ENCODE measurements at regions of chr7 and their contacts with region 1.

Region 1: GRCh38 chr7:106176414-106177299 is 64.5 kb upstream of the SYPL1 start:
- DNase-seq: peak; percentile 83
- H3K4me3 ChIP-seq: no peak overlapping the region
- H3K27ac ChIP-seq: no peak overlapping the region
- H3K4me1 ChIP-seq: no peaks in the 10 kb centered on the region
- H3K27me3 ChIP-seq: no peaks in the 10 kb centered on the region
- CTCF ChIP-seq: peak; percentile 98

Region 2: DNA sequence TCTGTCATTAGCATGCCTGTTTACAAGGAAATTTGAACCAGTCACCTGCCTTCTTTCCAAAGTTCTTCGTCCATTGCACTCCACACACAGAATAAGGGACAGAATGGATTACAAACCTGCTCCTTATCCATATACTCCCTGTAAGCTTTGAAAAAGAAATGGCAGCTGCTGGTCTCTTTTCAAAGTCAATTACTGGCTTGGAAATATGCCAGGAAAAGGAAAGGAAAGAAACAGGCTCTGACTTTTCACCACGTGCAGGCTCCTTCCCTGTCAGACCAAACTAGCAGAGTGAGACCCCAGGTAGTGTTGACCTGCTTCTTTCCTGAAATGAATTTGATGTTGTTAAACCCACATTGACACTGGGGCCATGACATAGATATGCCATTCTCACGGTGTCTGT is 1763.7 kb before region 1 on chr7:
- CTCF ChIA-PET with region 1: no interaction called
- POLR2A ChIA-PET with region 1: no interaction called
- intact Hi-C with region 1: no loop called
- DNase-seq: peak; percentile 1
- H3K4me3 ChIP-seq: no peak overlapping the region
- H3K27ac ChIP-seq: no peak overlapping the region
- H3K4me1 ChIP-seq: no peaks in the 10 kb centered on the region
- H3K27me3 ChIP-seq: peaks cover 3% of the 10 kb centered on the region
- CTCF ChIP-seq: no peak

Region 3: GRCh38 chr7:106367018-106367420 is 190.4 kb after region 1 on chr7:
- CTCF ChIA-PET with region 1: interaction called, 3 read pairs
- POLR2A ChIA-PET with region 1: no interaction called
- intact Hi-C with region 1: loop called (anchors 5 kb)
- DNase-seq: peak; percentile 61
- H3K4me3 ChIP-seq: no peak overlapping the region
- H3K27ac ChIP-seq: no peak overlapping the region
- H3K4me1 ChIP-seq: no peaks in the 10 kb centered on the region
- H3K27me3 ChIP-seq: no peaks in the 10 kb centered on the region
- CTCF ChIP-seq: peak; percentile 62

Region 4: GRCh38 chr7:106461993-106462859 is 285.6 kb after region 1 on chr7:
- CTCF ChIA-PET with region 1: interaction called, 72 read pairs
- POLR2A ChIA-PET with region 1: no interaction called
- intact Hi-C with region 1: loop called (anchors 1 kb)
- DNase-seq: peak; percentile 54
- H3K4me3 ChIP-seq: no peak overlapping the region
- H3K27ac ChIP-seq: no peak overlapping the region
- H3K4me1 ChIP-seq: peaks cover 4% of the 10 kb centered on the region
- H3K27me3 ChIP-seq: no peaks in the 10 kb centered on the region
- CTCF ChIP-seq: peak; percentile 60

Region 5: GRCh38 chr7:106659963-106660861 is 483.6 kb after region 1 on chr7:
- CTCF ChIA-PET with region 1: interaction called, 8 read pairs
- POLR2A ChIA-PET with region 1: no interaction called
- intact Hi-C with region 1: loop called (anchors 5 kb)
- DNase-seq: peak; percentile 82
- H3K4me3 ChIP-seq: peak overlapping the region; percentile 84
- H3K27ac ChIP-seq: peak overlapping the region; percentile 87
- H3K4me1 ChIP-seq: peaks cover 8% of the 10 kb centered on the region
- H3K27me3 ChIP-seq: no peaks in the 10 kb centered on the region
- CTCF ChIP-seq: peak; percentile 84

Measured in A673 (cell line).